PC-3 (cell line): ENCODE measurements at regions of chr12 and their contacts with region 1.

Region 1: GRCh38 chr12:13278249-13278787 is 81.8 kb downstream of the EMP1 start:
- DNase-seq: peak; percentile 69
- ATAC-seq: peak; percentile 93
- H3K4me3 ChIP-seq: no peak overlapping the region
- H3K27ac ChIP-seq: no peak overlapping the region
- H3K4me1 ChIP-seq: no peaks in the 10 kb centered on the region
- H3K27me3 ChIP-seq: peaks cover 60% of the 10 kb centered on the region
- CTCF ChIP-seq: peak; percentile 90

Region 2: DNA sequence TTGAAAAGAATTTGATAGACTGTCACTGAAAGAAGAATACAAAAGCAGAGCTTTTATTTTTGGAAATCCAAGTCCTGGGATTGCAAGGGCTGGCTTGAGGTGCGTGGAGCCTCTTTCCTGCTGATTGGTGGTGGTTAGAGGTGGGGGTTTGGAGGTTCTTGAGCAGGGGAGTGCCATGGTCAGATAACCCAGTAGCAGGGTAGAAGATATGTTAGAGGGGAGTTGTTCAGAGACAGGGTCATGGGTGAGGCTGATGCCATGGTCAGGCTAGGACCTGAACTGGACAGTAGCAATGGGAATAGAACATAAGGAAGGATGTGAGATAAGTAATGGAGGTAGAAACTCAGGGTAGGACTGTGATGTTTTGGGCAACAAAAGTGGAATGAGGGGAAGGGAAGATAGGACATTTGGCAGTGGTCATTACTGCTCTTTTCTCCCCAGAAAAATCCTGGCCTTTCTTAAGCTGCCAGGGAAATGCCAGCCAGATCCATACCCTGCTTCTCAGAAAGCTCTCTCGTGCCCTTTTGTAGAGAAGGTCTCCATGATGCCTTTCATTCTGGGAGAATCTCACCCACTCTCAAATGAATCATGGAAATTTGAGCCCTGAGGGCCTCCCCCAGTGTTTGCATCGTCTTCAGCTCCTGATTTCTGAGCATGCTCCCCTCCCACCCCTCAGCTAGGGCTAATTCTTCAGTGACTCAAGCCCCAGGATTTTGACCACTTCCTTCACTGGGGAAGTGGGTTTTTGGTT is 72.3 kb before region 1 on chr12:
- CTCF ChIA-PET with region 1: no interaction called
- POLR2A ChIA-PET with region 1: no interaction called
- intact Hi-C with region 1: no loop called
- DNase-seq: peak; percentile 98
- ATAC-seq: peak; percentile 76
- H3K4me3 ChIP-seq: no peak overlapping the region
- H3K27ac ChIP-seq: peak overlapping the region; percentile 91
- H3K4me1 ChIP-seq: peaks cover 75% of the 10 kb centered on the region
- H3K27me3 ChIP-seq: no peaks in the 10 kb centered on the region
- CTCF ChIP-seq: no peak

Region 3: GRCh38 chr12:13534645-13535398 is 256.5 kb after region 1 on chr12:
- CTCF ChIA-PET with region 1: interaction called, 7 read pairs
- POLR2A ChIA-PET with region 1: no interaction called
- intact Hi-C with region 1: loop called (anchors 2 kb)
- DNase-seq: peak; percentile 75
- ATAC-seq: peak; percentile 35; the same call in 1 of the 2 replicates
- H3K4me3 ChIP-seq: 0 out of 2 replicates have a peak overlapping the region, but pooled peaks have one; percentile 24
- H3K27ac ChIP-seq: no peak overlapping the region
- H3K4me1 ChIP-seq: no peaks in the 10 kb centered on the region
- H3K27me3 ChIP-seq: peaks cover 20% of the 10 kb centered on the region; the same call in 1 of the 2 replicates
- CTCF ChIP-seq: peak; percentile 86

Region 4: DNA sequence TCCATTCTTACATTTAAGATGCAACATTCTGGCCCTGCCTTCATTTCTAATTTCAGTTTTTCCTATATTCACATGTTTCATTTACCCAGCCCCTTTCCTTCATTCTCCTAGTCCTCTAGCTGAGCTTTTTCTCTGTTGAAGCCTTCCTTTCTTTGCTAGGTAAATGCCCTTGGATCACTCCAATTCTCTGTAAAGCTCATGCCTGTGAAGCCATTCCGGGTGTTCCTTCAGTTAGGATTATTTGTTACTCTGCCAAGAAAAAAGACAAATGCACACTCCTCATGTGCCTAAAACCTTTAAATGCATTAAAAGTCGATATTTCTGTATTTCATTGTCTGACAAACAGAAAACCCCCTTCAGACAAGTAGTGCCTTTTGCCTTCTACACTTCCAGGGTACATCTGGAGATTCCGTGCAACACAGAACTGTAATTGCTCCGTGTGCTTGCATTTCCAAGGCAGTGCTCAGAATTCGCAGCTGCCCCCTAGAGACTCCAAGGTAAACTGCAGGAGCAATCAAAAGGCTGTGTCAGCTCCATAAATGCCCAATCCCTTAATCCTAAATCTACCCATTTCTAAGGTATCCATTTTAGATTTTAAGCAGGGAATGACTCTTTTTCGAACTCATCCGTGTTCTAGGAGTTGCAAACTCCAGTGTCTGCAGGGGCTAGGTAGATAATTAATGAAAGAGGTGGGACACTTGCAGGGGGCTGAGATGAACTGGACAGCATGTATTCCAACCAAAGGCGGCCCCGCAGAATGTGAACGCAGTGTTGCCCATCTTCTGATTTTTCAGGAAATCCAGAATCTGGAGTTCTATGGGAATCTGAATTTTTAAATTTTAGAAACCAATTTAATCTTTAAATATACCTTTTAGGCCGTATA is 382.9 kb after region 1 on chr12:
- CTCF ChIA-PET with region 1: no interaction called
- POLR2A ChIA-PET with region 1: no interaction called
- intact Hi-C with region 1: loop called (anchors 1 kb)
- DNase-seq: peak; percentile 53
- ATAC-seq: peak; percentile 49; the same call in 1 of the 2 replicates
- H3K4me3 ChIP-seq: no peak overlapping the region
- H3K27ac ChIP-seq: no peak overlapping the region
- H3K4me1 ChIP-seq: no peaks in the 10 kb centered on the region
- H3K27me3 ChIP-seq: peaks cover 35% of the 10 kb centered on the region
- CTCF ChIP-seq: peak; percentile 64